Thyroid gland (tissue), 4 donors: ENCODE measurements at regions of chr10 and their contacts with region 1.

Region 1: GRCh38 chr10:69936091-69936490 is 116.6 kb upstream of the MACROH2A2 start:
- DNase-seq: no peak
- H3K4me3 ChIP-seq: no peak overlapping the region
- H3K27ac ChIP-seq: no peak overlapping the region
- H3K4me1 ChIP-seq: peaks cover 27 to 39% of the 10 kb centered on the region in 2 donors
- H3K27me3 ChIP-seq: no peaks in the 10 kb centered on the region
- CTCF ChIP-seq: peak in 2 of 6 experiments; percentile 10 to 15
- POLR2A ChIP-seq: no peak

Region 2: GRCh38 chr10:69774596-69774995 is 161.5 kb before region 1 on chr10:
- intact Hi-C with region 1: loop called (anchors 10 kb)
- DNase-seq: no peak
- H3K4me3 ChIP-seq: no peak overlapping the region
- H3K27ac ChIP-seq: no peak overlapping the region
- H3K4me1 ChIP-seq: peaks cover 0 to 1% of the 10 kb centered on the region in 2 donors
- H3K27me3 ChIP-seq: no peaks in the 10 kb centered on the region
- CTCF ChIP-seq: no peak
- POLR2A ChIP-seq: no peak

Region 3: DNA sequence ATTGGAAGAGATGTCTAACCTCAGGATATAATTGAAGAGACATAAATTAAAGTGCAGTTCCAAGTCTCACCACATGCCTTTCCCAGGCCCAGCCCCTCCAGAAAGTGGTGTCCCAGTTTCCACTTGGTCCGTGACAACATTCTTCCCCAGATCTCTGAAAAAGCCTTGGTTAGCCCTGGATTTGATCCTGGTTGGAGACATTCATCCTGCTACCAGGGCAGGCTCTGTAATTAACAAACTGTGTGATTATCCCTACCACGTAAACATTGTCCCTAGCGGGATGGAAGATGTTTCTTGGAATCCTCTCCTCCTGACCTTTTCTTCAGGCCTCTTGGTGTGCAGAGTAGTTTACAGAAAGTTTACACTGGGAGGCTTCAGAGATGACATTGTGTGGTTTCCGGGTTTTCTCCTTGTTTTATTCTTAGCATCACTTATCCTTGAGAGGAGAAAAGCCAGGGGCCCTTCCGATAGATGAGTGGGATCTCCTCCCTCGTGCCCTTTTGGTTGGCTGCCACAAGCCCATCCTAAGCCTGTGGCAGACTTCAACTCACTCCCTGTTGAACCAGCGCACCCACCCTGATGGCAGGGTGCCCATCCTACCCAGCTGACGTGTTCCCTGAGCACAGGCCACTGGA is 50.6 kb before region 1 on chr10:
- intact Hi-C with region 1: no loop called
- DNase-seq: peak; percentile 29 to 32
- H3K4me3 ChIP-seq: no peak overlapping the region
- H3K27ac ChIP-seq: no peak overlapping the region
- H3K4me1 ChIP-seq: peaks cover under 1 to 13% of the 10 kb centered on the region in 2 donors
- H3K27me3 ChIP-seq: no peaks in the 10 kb centered on the region
- CTCF ChIP-seq: peak; percentile 19 to 57 (median 50)
- POLR2A ChIP-seq: no peak

Region 4: GRCh38 chr10:70169649-70170364 is 233.7 kb after region 1 on chr10:
- intact Hi-C with region 1: no loop called
- DNase-seq: no peak
- H3K4me3 ChIP-seq: peak overlapping the region; percentile 78 to 82 (median 80)
- H3K27ac ChIP-seq: peak overlapping the region; percentile 71 to 89 (median 89)
- H3K4me1 ChIP-seq: peaks cover 11 to 21% of the 10 kb centered on the region in 2 donors
- H3K27me3 ChIP-seq: no peaks in the 10 kb centered on the region
- CTCF ChIP-seq: no peak
- POLR2A ChIP-seq: no peak

Region 5: GRCh38 chr10:70478191-70479164 is 542.4 kb after region 1 on chr10 and contains the start of gene PALD1:
- intact Hi-C with region 1: no loop called
- DNase-seq: peak; percentile 48 to 50
- H3K4me3 ChIP-seq: peak within 1 kb of the TSS in 1 of 3 donors; percentile 45
- H3K27ac ChIP-seq: peak within 1 kb of the TSS; percentile 21 to 70 (median 24)
- H3K4me1 ChIP-seq: peaks cover 6 to 34% of the 10 kb centered on the region in 2 donors
- H3K27me3 ChIP-seq: no peaks in the 10 kb centered on the region
- CTCF ChIP-seq: peak in 1 of 6 experiments; percentile 11
- POLR2A ChIP-seq: peak in 1 of 2 donors; percentile 16
- total RNA-seq, gene PALD1: 10.7 to 28.2 (median 14.0) TPM